ENCODE measurements at regions of chrX and their contacts with region 1.

Region 1: DNA sequence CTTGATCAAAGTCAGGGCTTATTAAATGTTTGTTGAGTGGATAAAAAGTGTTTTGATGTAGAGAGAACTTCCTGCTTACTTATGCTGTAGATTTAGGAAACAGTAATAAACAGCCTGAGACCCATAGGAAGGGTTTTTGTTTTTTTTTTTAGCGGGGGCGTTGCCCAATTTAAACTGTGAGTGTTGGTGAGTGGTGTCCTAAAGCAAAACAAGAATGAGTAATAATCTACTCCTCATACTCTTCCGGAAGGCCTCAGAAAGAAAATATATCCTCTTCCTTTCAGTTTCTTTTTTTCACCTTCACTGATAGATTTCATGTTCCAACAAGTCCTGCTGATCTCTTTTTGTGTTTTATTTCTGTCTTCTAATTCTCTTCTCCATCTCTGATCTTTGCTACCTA is 104.4 kb upstream of the SCML1 start:
- DNase-seq: peak; percentile 36
- H3K4me3 Mint-ChIP-seq: peak overlapping the region; percentile 56
- H3K27ac Mint-ChIP-seq: peak overlapping the region; percentile 90
- H3K4me1 Mint-ChIP-seq: peaks cover 6% of the 10 kb centered on the region
- H3K27me3 Mint-ChIP-seq: peaks cover 23% of the 10 kb centered on the region
- CTCF ChIP-seq: no peak

Region 2: GRCh38 chrX:17613979-17614569 is 18.9 kb before region 1 on chrX:
- CTCF ChIA-PET with region 1: no interaction called
- POLR2A ChIA-PET with region 1: interaction called, 11 read pairs
- intact Hi-C with region 1: no loop called
- DNase-seq: peak; percentile 76
- H3K4me3 Mint-ChIP-seq: no peak overlapping the region
- H3K27ac Mint-ChIP-seq: no peak overlapping the region
- H3K4me1 Mint-ChIP-seq: peaks cover 21% of the 10 kb centered on the region
- H3K27me3 Mint-ChIP-seq: peaks cover 62% of the 10 kb centered on the region
- CTCF ChIP-seq: no peak

Region 3: GRCh38 chrX:18931972-18932371 is 1299.0 kb after region 1 on chrX:
- CTCF ChIA-PET with region 1: no interaction called
- POLR2A ChIA-PET with region 1: no interaction called
- intact Hi-C with region 1: no loop called
- DNase-seq: peak; percentile 24
- H3K4me3 Mint-ChIP-seq: no peak overlapping the region
- H3K27ac Mint-ChIP-seq: no peak overlapping the region
- H3K4me1 Mint-ChIP-seq: no peaks in the 10 kb centered on the region
- H3K27me3 Mint-ChIP-seq: no peaks in the 10 kb centered on the region
- CTCF ChIP-seq: peak; percentile 28

Measured in MCF 10A (cell line).